ENCODE measurements at regions of chr17 and their contacts with region 1.

Region 1: DNA sequence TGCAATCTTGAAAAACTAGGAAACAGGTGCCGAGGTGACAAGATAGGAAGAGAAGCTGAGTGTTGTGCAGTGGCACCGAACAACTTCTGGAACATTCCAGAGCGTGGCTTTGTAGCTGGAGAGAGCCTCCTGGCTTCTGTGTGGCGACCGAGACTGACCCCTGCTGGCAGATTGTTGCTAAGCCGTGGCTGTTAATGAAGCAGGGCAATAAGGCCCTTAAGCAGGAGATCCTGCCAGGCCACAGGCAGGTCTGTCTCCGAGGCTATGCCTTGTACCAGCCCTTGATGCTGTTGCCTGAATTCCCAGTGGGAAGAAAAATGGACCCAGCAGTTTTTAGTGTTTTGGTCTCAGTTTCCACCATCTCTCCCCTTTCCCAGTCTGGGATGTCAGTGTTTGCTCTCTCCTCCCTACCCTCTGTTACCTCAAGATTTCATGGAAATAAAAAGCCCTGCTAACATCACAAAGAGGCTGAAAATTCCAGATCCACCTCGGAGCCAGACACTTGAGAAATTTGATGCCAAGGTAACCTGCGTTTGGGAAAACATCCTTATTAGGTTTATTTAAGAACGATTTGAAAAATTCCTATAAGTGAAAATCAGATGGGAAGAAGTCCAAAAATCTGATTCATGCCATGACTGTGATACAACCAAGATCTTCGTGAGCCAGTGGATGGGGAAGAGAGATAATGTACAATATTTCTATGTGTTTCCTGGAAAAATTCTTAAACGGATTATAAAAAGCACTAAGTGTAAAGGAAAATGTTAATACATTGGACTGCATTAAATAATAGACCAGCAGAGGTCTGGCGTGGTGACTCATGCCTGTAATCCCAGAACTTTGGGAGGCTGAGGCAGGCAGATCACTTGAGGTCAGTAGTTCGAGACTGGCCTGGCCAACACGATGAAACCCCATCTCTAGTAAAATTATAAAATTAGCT is 265.1 kb downstream of the PRKCA start:
- DNase-seq: peak; percentile 61 to 87 (median 80)
- ATAC-seq: peak; percentile 73
- H3K4me3 ChIP-seq: no peak overlapping the region
- H3K4me3 Mint-ChIP-seq: no peak overlapping the region
- H3K27ac ChIP-seq: no peak overlapping the region
- H3K27ac Mint-ChIP-seq: no peak overlapping the region
- H3K4me1 ChIP-seq: no peaks in the 10 kb centered on the region
- H3K4me1 Mint-ChIP-seq: peaks cover 28% of the 10 kb centered on the region
- H3K27me3 ChIP-seq: no peaks in the 10 kb centered on the region
- H3K27me3 Mint-ChIP-seq: no peaks in the 10 kb centered on the region
- CTCF ChIP-seq: peak; percentile 89

Region 2: GRCh38 chr17:65774787-65775186 is 792.7 kb before region 1 on chr17:
- CTCF ChIA-PET with region 1: no interaction called
- POLR2A ChIA-PET with region 1: no interaction called
- intact Hi-C with region 1: no loop called
- DNase-seq: no peak
- ATAC-seq: no peak
- H3K4me3 ChIP-seq: no peak overlapping the region
- H3K4me3 Mint-ChIP-seq: no peak overlapping the region
- H3K27ac ChIP-seq: no peak overlapping the region
- H3K27ac Mint-ChIP-seq: peak overlapping the region; percentile 30
- H3K4me1 ChIP-seq: no peaks in the 10 kb centered on the region
- H3K4me1 Mint-ChIP-seq: peaks cover 14% of the 10 kb centered on the region
- H3K27me3 ChIP-seq: peaks cover 0 to 2% of the 10 kb centered on the region in 2 experiments
- H3K27me3 Mint-ChIP-seq: peaks cover 2% of the 10 kb centered on the region
- CTCF ChIP-seq: no peak

Region 3: DNA sequence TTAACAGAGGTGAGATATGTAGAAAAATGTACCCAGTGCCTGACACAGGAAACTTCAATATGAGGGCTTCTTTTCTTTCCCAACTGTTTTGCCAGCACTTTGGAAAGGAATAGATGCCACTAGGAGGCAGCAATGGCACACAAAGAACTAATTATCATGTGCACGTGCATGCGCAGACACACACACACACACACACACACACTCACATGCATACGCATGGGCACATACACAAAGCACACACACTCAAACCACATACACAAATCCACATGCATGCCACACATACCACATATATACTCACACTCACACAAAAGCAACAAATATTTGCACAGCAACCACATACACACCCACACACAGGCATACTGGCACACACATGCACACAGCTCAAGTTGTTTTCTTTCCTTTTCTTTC is 366.8 kb before region 1 on chr17:
- CTCF ChIA-PET with region 1: interaction called, 13 read pairs
- POLR2A ChIA-PET with region 1: no interaction called
- intact Hi-C with region 1: loop called (anchors 1 kb)
- DNase-seq: peak in 8 of 9 experiments; percentile 3 to 74 (median 28)
- ATAC-seq: peak; percentile 42
- H3K4me3 ChIP-seq: no peak overlapping the region
- H3K4me3 Mint-ChIP-seq: no peak overlapping the region
- H3K27ac ChIP-seq: no peak overlapping the region
- H3K27ac Mint-ChIP-seq: no peak overlapping the region
- H3K4me1 ChIP-seq: peaks cover 18% of the 10 kb centered on the region
- H3K4me1 Mint-ChIP-seq: peaks cover 19% of the 10 kb centered on the region
- H3K27me3 ChIP-seq: no peaks in the 10 kb centered on the region
- H3K27me3 Mint-ChIP-seq: no peaks in the 10 kb centered on the region
- CTCF ChIP-seq: peak; percentile 33

Region 4: GRCh38 chr17:66290101-66290722 is 277.3 kb before region 1 on chr17:
- CTCF ChIA-PET with region 1: no interaction called
- POLR2A ChIA-PET with region 1: no interaction called
- intact Hi-C with region 1: loop called in 1 of 2 experiments (anchors 1 kb)
- DNase-seq: peak in 2 of 9 experiments; percentile 24 to 51
- ATAC-seq: peak; percentile 48
- H3K4me3 ChIP-seq: no peak overlapping the region
- H3K4me3 Mint-ChIP-seq: no peak overlapping the region
- H3K27ac ChIP-seq: no peak overlapping the region
- H3K27ac Mint-ChIP-seq: no peak overlapping the region
- H3K4me1 ChIP-seq: peaks cover 24% of the 10 kb centered on the region
- H3K4me1 Mint-ChIP-seq: peaks cover 36% of the 10 kb centered on the region
- H3K27me3 ChIP-seq: no peaks in the 10 kb centered on the region
- H3K27me3 Mint-ChIP-seq: no peaks in the 10 kb centered on the region
- CTCF ChIP-seq: no peak

Region 5: DNA sequence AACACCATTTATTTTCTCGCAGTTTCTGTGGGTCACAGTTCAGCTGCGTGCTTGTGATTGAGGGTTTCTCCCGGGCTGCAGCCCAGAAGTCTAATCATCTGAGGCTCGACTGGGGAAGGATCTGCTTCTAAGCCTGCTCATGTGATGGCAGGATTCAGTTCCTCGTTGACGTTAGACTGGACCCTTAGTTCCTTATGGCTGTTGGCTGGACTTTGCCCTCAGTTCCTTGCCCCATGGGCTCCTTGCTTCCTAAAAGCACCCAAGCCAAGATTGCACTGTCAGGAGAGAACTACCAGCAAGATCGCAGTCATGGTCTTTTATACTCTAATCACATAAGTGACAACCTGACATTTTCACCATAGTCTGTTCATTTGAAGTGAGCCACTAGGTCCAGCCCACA is 15.1 kb before region 1 on chr17:
- CTCF ChIA-PET with region 1: interaction called, 11 read pairs
- POLR2A ChIA-PET with region 1: no interaction called
- intact Hi-C with region 1: no loop called
- DNase-seq: no peak
- ATAC-seq: no peak
- H3K4me3 ChIP-seq: no peak overlapping the region
- H3K4me3 Mint-ChIP-seq: no peak overlapping the region
- H3K27ac ChIP-seq: no peak overlapping the region
- H3K27ac Mint-ChIP-seq: no peak overlapping the region
- H3K4me1 ChIP-seq: peaks cover 15% of the 10 kb centered on the region
- H3K4me1 Mint-ChIP-seq: peaks cover 36% of the 10 kb centered on the region
- H3K27me3 ChIP-seq: no peaks in the 10 kb centered on the region
- H3K27me3 Mint-ChIP-seq: no peaks in the 10 kb centered on the region
- CTCF ChIP-seq: no peak

Region 6: DNA sequence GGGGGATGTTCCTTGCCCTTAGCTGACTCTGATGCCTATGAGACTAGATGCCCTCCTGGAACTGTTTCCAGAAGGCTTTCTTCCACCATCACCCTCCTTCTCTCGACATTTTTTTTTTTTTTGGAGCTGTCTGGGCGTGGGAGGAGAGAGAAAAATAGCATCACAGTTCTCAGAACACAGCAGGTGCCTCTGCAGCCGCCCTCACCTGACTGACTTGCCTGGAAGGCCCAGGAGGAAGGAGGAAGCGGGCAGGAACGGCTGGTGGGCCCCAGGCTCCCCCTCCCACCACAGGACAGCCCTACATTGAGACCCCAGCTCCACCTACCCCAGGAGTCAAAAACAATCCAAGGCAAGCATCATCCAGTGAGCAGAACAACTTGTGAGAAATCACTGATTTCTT is 247.1 kb after region 1 on chr17:
- CTCF ChIA-PET with region 1: no interaction called
- POLR2A ChIA-PET with region 1: no interaction called
- intact Hi-C with region 1: no loop called
- DNase-seq: no peak
- ATAC-seq: no peak
- H3K4me3 ChIP-seq: no peak overlapping the region
- H3K4me3 Mint-ChIP-seq: no peak overlapping the region
- H3K27ac ChIP-seq: no peak overlapping the region
- H3K27ac Mint-ChIP-seq: no peak overlapping the region
- H3K4me1 ChIP-seq: no peaks in the 10 kb centered on the region
- H3K4me1 Mint-ChIP-seq: no peaks in the 10 kb centered on the region
- H3K27me3 ChIP-seq: no peaks in the 10 kb centered on the region
- H3K27me3 Mint-ChIP-seq: peaks cover 12% of the 10 kb centered on the region
- CTCF ChIP-seq: no peak

Region 7: DNA sequence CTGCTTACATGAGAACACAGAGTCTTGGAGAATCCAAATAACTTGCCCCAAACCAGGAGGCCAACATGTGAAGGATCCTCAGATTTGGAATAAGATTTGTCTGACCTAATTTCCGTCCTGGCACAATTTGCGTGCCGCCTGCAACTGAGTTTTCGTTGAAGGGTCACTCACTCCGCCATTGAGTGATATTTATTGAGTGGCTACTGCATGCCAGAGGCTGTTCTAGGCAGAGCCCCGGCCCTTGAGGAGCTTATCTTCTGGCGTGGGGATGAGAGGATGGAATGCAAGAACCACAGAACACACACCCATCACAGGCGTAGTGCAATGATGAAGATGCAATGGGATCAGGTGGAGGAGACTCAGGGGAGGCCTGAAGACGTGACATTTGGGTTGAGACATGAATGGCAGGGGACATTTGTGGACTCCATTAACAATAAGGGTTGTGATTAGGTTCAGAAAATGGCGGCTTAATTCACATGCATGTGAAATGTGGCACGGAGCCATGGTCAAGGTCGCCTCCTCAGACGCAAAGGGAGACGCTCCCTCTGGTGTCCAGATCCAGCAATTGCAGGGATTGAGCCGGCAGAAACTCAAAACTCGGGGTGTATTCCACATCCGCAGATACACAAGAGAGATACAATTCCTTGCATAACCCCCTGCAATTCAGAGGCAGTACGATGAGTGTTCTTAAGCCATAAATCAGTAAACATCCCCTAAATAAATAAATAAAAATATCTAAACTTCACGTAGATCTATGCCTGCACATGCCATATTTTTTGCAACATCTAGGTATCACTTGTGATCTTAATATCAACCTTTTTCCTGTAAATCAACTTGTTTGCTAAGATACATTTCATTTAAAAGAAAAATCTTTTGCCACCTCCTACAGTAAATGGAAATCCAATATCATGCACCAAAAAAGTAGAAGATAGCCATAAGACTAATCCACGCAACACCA is 339.1 kb after region 1 on chr17:
- CTCF ChIA-PET with region 1: no interaction called
- POLR2A ChIA-PET with region 1: no interaction called
- intact Hi-C with region 1: loop called in 1 of 2 experiments (anchors 10 kb)
- DNase-seq: peak; percentile 27 to 79 (median 58)
- ATAC-seq: peak; percentile 48
- H3K4me3 ChIP-seq: no peak overlapping the region
- H3K4me3 Mint-ChIP-seq: no peak overlapping the region
- H3K27ac ChIP-seq: no peak overlapping the region
- H3K27ac Mint-ChIP-seq: no peak overlapping the region
- H3K4me1 ChIP-seq: no peaks in the 10 kb centered on the region
- H3K4me1 Mint-ChIP-seq: peaks cover 5% of the 10 kb centered on the region
- H3K27me3 ChIP-seq: no peaks in the 10 kb centered on the region
- H3K27me3 Mint-ChIP-seq: peaks cover 4% of the 10 kb centered on the region
- CTCF ChIP-seq: peak; percentile 67

Measured in CD8-positive, alpha-beta T cell (primary cell).